Mammary epithelial cell (primary cell): ENCODE measurements at regions of chr7 and their contacts with region 1.

Region 1: DNA sequence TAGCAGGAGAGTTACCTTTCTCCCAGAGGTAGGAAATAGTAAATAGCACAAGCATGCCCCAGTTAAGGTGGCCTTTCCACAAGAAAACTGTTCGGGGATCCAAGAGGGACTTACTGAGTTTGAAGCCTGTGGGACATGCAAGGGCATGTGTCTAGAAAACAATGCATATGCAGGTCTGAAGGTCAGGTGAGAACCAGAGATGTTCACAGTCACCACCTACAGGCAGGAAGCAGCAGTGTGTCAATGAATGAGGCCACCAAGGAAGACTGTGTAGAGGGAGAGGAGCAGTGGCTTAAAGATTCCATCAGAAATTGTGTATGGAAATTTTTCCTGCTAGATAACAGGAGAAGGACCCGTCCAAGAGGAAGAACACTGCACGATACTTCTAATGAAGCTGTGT is 66.0 kb downstream of the CALD1 start:
- DNase-seq: peak; percentile 73
- H3K4me3 ChIP-seq: no peak overlapping the region
- H3K27ac ChIP-seq: peak overlapping the region; percentile 59
- H3K4me1 ChIP-seq: peaks cover 26% of the 10 kb centered on the region
- H3K27me3 ChIP-seq: no peaks in the 10 kb centered on the region
- CTCF ChIP-seq: peak; percentile 81 to 84

Region 2: DNA sequence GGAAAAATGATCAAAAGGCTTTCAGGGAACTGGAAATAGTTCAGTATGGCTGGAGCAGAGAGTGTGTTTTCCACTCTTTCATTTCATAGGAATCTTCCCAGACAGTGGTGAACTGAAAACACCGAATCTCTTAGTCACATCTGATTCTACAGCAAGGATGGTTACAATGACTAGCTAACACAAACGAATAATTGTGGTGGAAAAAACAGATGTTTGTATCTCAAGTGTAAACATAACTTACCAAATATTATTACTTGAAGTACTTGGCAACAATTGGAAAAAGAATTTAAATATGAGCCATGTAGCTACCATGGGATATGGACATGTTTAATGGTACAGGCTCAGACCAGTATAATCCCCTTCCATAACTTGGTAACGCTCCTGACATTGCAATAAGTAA is 219.9 kb before region 1 on chr7:
- CTCF ChIA-PET with region 1: no interaction called
- dilution Hi-C with region 1: no loop called
- in situ Hi-C with region 1: no loop called
- intact Hi-C with region 1: no loop called
- DNase-seq: peak; percentile 90
- H3K4me3 ChIP-seq: no peak overlapping the region
- H3K27ac ChIP-seq: no peak overlapping the region
- H3K4me1 ChIP-seq: peaks cover 16% of the 10 kb centered on the region
- H3K27me3 ChIP-seq: no peaks in the 10 kb centered on the region
- CTCF ChIP-seq: no peak

Region 3: DNA sequence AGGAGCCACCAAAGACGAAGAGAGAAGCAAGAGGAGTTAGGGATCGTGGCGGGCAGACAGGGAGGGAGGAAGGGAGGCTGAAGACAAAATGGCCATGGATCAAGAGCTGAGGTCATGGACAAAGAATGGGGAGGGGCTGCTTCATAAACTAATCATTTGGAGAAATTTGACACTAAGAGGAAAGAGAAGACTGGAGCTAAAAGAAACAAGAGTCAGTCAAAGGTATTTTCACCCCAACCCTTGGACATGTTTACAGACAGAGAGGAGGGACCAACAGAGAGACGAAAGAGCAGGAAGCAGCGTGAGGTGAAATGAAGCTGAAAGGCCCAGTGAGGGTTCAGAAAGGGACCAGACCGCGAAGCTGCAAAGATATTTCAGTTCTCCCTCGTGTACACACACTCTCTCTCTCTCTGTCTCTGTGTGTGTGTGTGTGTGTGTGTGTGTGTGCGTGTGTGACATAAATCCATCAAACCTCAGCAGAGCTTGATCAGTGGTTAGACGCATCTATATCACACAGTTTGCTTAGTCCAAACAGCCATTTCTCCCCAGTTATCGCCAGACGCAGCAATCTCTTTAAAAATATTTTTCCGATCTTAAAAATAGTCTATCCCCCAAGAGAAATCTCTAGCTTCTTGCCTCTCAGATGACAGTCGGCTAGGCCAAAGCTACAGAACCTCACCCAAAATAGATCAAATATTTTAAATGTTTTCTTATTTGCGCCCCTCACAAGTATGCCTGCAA is 78.5 kb before region 1 on chr7:
- CTCF ChIA-PET with region 1: no interaction called
- dilution Hi-C with region 1: loop called (anchors 5 kb)
- in situ Hi-C with region 1: no loop called
- intact Hi-C with region 1: no loop called
- DNase-seq: no peak
- H3K4me3 ChIP-seq: no peak overlapping the region
- H3K27ac ChIP-seq: no peak overlapping the region
- H3K4me1 ChIP-seq: peaks cover 3% of the 10 kb centered on the region
- H3K27me3 ChIP-seq: no peaks in the 10 kb centered on the region
- CTCF ChIP-seq: no peak

Region 4: DNA sequence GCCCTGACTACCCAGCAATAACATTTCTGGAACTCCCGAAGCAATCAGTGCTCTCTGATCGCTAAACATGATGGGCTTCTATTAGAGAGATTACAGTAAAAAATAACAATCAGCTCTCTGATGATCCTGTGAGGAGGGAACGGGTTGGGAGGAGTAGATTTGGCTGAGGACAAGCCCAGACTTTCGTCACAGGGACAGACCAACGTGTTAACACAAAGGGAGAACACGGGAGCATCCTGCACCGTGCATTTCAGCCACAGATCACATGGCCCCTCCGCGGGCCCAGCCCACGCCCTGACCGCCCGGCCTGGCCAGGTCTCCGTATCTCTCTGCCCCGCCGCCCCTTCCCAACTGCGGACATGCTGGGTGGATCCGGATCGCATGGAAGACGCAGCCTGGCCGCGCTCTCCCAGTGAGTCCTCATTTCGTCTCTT is 45.8 kb after region 1 on chr7:
- CTCF ChIA-PET with region 1: no interaction called
- dilution Hi-C with region 1: no loop called
- in situ Hi-C with region 1: no loop called
- intact Hi-C with region 1: loop called (anchors 2 kb)
- DNase-seq: peak; percentile 98
- H3K4me3 ChIP-seq: peak overlapping the region; percentile 74 to 90 (median 75)
- H3K27ac ChIP-seq: peak overlapping the region; percentile 88
- H3K4me1 ChIP-seq: peaks cover 37% of the 10 kb centered on the region
- H3K27me3 ChIP-seq: no peaks in the 10 kb centered on the region
- CTCF ChIP-seq: no peak